ENCODE measurements at regions of chr21 and their contacts with region 1.

Region 1: DNA sequence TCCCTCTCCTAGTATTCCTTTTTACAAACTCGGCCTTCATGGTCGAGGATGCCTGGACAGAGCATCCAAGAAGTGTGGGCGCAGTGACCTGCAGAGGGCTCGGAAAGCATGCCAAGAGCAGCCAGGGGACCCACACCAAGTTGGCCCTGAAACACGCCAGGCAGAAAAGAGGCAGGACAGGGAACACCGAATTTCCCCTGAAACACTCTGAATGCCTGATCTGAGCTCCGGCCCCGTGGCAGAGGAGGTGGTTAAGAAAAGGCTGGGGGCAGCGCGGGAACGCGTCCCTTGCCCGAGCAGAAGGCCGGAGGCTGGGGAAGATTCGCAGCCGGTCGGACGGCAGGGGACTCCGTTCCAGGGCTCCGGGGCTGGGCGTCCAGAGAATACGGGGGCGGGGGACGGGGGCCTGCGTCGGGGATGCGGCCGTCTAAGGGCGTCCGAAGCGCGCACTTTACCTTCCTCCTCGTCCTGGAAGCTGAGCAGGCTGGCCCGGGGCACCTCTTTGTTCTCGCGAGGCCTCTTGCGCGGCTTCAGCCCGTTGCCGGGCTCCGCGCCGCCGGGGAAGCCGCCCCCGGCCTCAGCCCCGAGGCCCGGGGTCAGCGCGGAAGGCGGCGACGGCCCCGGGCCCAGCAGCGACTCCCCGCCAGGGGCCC is 558 bp downstream of the PAXBP1 start:
- DNase-seq: no peak
- H3K4me3 Mint-ChIP-seq: peak overlapping the region; percentile 99
- H3K27ac Mint-ChIP-seq: peak overlapping the region; percentile 98
- H3K4me1 Mint-ChIP-seq: peaks cover 66% of the 10 kb centered on the region
- H3K27me3 Mint-ChIP-seq: peaks cover 3% of the 10 kb centered on the region

Region 2: DNA sequence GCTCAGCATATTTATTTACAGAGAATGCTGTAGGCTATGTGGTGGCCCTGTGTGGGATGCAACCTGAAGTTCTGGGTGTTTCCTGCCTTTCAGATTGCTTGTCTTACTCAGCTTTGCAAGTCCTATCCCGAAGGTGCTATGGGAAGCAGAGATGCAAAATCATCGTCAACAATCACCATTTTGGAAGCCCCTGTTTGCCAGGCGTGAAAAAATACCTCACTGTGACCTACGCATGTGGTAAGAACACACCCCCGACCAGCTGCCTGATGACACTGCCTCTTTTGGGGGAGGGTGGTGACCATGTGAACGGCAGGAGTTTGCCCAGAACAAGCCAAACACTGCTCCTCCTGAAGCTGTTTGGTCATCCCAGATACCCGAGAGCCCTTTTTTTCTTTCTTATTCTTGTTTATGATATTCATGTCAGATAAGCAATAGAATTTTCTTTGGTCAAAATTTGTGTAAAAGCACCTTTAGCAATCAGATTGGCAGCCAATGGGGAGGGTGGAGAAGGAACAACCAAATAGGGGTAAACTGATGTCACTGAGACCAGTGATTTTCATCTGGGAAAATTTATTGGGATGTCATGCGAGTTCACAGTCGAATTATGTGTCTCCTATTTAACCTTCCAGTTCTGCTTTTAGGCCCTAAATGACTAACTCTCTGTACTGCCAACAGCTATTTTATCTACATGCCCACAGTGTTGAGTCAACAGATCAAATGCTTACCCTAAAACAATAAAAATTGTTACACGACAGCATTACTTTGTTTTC is 275.9 kb before region 1 on chr21:
- intact Hi-C with region 1: loop called (anchors 1 kb)
- DNase-seq: no peak
- H3K4me3 Mint-ChIP-seq: no peak overlapping the region
- H3K27ac Mint-ChIP-seq: no peak overlapping the region
- H3K4me1 Mint-ChIP-seq: peaks cover 16% of the 10 kb centered on the region
- H3K27me3 Mint-ChIP-seq: no peaks in the 10 kb centered on the region

Region 3: GRCh38 chr21:32712043-32712442 is 59.0 kb before region 1 on chr21:
- intact Hi-C with region 1: loop called (anchors 5 kb)
- DNase-seq: peak; percentile 20
- H3K4me3 Mint-ChIP-seq: no peak overlapping the region
- H3K27ac Mint-ChIP-seq: no peak overlapping the region
- H3K4me1 Mint-ChIP-seq: peaks cover 22% of the 10 kb centered on the region
- H3K27me3 Mint-ChIP-seq: no peaks in the 10 kb centered on the region

Region 4: GRCh38 chr21:32807717-32808380 is 36.9 kb after region 1 on chr21:
- intact Hi-C with region 1: loop called (anchors 1 kb)
- DNase-seq: no peak
- H3K4me3 Mint-ChIP-seq: no peak overlapping the region
- H3K27ac Mint-ChIP-seq: no peak overlapping the region
- H3K4me1 Mint-ChIP-seq: peaks cover 15% of the 10 kb centered on the region
- H3K27me3 Mint-ChIP-seq: peaks cover 9% of the 10 kb centered on the region

Region 5: GRCh38 chr21:32819694-32820093 is 48.7 kb after region 1 on chr21:
- intact Hi-C with region 1: no loop called
- DNase-seq: no peak
- H3K4me3 Mint-ChIP-seq: no peak overlapping the region
- H3K27ac Mint-ChIP-seq: no peak overlapping the region
- H3K4me1 Mint-ChIP-seq: no peaks in the 10 kb centered on the region
- H3K27me3 Mint-ChIP-seq: peaks cover 9% of the 10 kb centered on the region

Region 6: GRCh38 chr21:33127154-33127893 is 356.3 kb after region 1 on chr21:
- intact Hi-C with region 1: no loop called
- DNase-seq: peak; percentile 8
- H3K4me3 Mint-ChIP-seq: no peak overlapping the region
- H3K27ac Mint-ChIP-seq: no peak overlapping the region
- H3K4me1 Mint-ChIP-seq: peaks cover 8% of the 10 kb centered on the region
- H3K27me3 Mint-ChIP-seq: peaks cover 16% of the 10 kb centered on the region

Region 7: DNA sequence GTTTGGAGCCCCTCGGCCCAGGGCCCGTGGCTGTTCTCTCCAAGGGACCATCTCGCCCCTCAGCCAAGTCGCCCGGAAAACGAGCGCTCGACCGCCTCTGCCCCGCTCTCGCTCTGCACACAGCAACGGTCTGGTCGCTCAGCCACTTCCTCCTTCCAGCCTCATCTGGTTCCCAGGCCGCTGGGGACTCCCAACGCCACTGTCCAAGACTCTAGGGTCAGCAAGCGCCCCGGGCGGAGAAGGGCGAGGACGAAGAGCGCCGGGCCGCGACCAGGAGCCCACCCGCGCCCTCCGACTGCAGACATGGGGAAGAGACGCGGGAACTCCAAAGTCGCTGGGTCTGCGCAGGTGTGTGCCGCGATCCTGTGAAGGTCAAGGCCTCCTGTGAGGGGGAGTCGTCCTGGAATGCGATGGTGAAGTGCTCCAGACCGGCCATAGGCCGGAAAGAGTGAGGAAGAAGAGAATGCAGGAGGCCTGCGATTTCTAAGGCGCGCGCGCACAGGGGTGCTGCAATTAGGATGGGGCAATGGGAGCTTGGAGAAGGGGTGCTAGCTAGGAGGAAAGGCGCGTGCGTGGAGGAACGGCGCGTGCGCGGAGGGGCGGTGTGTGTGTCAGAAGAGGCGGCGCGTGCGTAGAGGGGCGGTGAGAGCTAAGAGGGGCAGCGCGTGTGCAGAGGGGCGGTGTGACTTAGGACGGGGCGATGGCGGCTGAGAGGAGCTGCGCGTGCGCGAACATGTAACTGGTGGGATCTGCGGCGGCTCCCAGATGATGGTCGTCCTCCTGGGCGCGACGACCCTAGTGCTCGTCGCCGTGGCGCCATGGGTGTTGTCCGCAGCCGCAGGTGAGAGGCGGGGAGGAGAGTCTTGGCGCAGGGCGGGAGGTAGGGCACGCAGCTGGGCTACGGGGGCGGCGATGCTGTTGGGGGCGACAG is 553.6 kb after region 1 on chr21 and contains the start of gene IFNAR1:
- intact Hi-C with region 1: loop called (anchors 1 kb)
- DNase-seq: peak; percentile 98
- H3K4me3 Mint-ChIP-seq: no peak within 1 kb of the TSS
- H3K27ac Mint-ChIP-seq: no peak within 1 kb of the TSS
- H3K4me1 Mint-ChIP-seq: peaks cover 23% of the 10 kb centered on the region
- H3K27me3 Mint-ChIP-seq: peaks cover 6% of the 10 kb centered on the region
- total RNA-seq, gene IFNAR1: 20.4 and 20.7 TPM in 2 replicates

Region 8: GRCh38 chr21:33479679-33480480 is 708.9 kb after region 1 on chr21 and contains the start of gene TMEM50B:
- intact Hi-C with region 1: loop called (anchors 1 kb)
- DNase-seq: peak; percentile 93
- H3K4me3 Mint-ChIP-seq: peak within 1 kb of the TSS; percentile 88
- H3K27ac Mint-ChIP-seq: peak within 1 kb of the TSS; percentile 84
- H3K4me1 Mint-ChIP-seq: peaks cover 23% of the 10 kb centered on the region
- H3K27me3 Mint-ChIP-seq: peaks cover 6% of the 10 kb centered on the region
- total RNA-seq, gene TMEM50B: 12.0 and 14.0 TPM in 2 replicates

Region 9: GRCh38 chr21:33641336-33642026 is 870.5 kb after region 1 on chr21 and contains the start of gene CRYZL1:
- intact Hi-C with region 1: loop called (anchors 2 kb)
- DNase-seq: peak; percentile 100
- H3K4me3 Mint-ChIP-seq: peak within 1 kb of the TSS; percentile 89
- H3K27ac Mint-ChIP-seq: peak within 1 kb of the TSS; percentile 96
- H3K4me1 Mint-ChIP-seq: peaks cover 14% of the 10 kb centered on the region
- H3K27me3 Mint-ChIP-seq: peaks cover 23% of the 10 kb centered on the region
- total RNA-seq, gene CRYZL1: 25.6 and 34.8 TPM in 2 replicates